ENCODE measurements at regions of chr9 and their contacts with region 1.

Region 1: GRCh38 chr9:71725590-71726338 is 42.5 kb downstream of the CEMIP2 start:
- DNase-seq: peak; percentile 90
- ATAC-seq: peak; percentile 53
- H3K4me3 ChIP-seq: no peak overlapping the region
- H3K27ac ChIP-seq: no peak overlapping the region
- H3K4me1 ChIP-seq: peaks cover 8% of the 10 kb centered on the region
- H3K27me3 ChIP-seq: no peaks in the 10 kb centered on the region
- CTCF ChIP-seq: no peak
- POLR2A ChIP-seq: no peak
- RAD21 ChIP-seq: no peak

Region 2: GRCh38 chr9:70285246-70285645 is 1440.5 kb before region 1 on chr9:
- CTCF ChIA-PET with region 1: no interaction called
- POLR2A ChIA-PET with region 1: no interaction called
- dilution Hi-C with region 1: no loop called
- in situ Hi-C with region 1: loop called (anchors 25 kb)
- intact Hi-C with region 1: no loop called
- DNase-seq: peak; percentile 73
- ATAC-seq: peak; percentile 74
- H3K4me3 ChIP-seq: no peak overlapping the region
- H3K27ac ChIP-seq: peak overlapping the region; percentile 81; the same call in 1 of the 2 replicates
- H3K4me1 ChIP-seq: peaks cover 15% of the 10 kb centered on the region
- H3K27me3 ChIP-seq: no peaks in the 10 kb centered on the region
- CTCF ChIP-seq: no peak
- POLR2A ChIP-seq: no peak
- RAD21 ChIP-seq: no peak

Region 3: GRCh38 chr9:70438341-70438928 is 1287.3 kb before region 1 on chr9:
- CTCF ChIA-PET with region 1: no interaction called
- POLR2A ChIA-PET with region 1: no interaction called
- dilution Hi-C with region 1: no loop called
- in situ Hi-C with region 1: loop called (anchors 25 kb)
- intact Hi-C with region 1: no loop called
- DNase-seq: peak; percentile 73
- ATAC-seq: peak; percentile 49
- H3K4me3 ChIP-seq: no peak overlapping the region
- H3K27ac ChIP-seq: peak overlapping the region; percentile 20; the same call in 1 of the 2 replicates
- H3K4me1 ChIP-seq: peaks cover 11% of the 10 kb centered on the region
- H3K27me3 ChIP-seq: no peaks in the 10 kb centered on the region
- CTCF ChIP-seq: no peak
- POLR2A ChIP-seq: no peak
- RAD21 ChIP-seq: no peak

Region 4: DNA sequence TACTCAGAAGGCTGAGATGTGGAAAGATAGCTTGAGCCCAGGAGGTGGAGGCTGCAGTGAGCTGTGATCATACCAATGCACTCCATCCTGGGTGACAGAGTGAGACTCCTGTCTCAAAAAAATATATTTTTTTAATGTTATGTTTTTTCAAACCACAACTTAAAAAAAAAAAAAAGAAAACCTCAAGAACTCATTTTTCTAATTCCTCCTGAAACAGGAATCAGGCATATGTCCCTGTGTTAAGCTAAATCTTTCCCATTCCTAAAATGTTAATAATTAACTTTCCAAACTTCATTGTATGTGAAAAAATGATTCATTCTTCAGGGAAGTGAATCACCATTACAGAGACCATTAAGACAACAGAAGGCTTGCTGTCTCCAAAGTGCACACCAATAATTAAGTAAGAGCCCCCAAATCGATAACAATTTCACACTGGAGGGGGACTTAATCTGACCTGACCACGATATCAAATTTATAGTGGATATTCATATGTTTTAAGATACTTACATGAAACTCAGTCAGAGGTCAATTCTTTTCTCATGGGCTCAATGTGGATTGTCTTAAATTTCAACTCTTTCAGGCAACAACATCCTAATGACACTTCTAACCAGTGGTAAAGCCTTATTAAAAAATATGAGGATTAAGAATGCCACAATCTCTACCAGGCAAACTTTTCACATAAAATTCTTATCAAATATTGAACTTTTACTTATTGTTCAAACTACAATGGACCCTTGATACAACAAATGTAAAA is 37.3 kb after region 1 on chr9:
- CTCF ChIA-PET with region 1: interaction called, 4 read pairs
- POLR2A ChIA-PET with region 1: no interaction called
- dilution Hi-C with region 1: no loop called
- in situ Hi-C with region 1: loop called (anchors 5 kb)
- intact Hi-C with region 1: loop called (anchors 2 kb)
- DNase-seq: peak; percentile 84
- ATAC-seq: peak; percentile 48
- H3K4me3 ChIP-seq: no peak overlapping the region
- H3K27ac ChIP-seq: peak overlapping the region; percentile 75
- H3K4me1 ChIP-seq: peaks cover 17% of the 10 kb centered on the region
- H3K27me3 ChIP-seq: no peaks in the 10 kb centered on the region
- CTCF ChIP-seq: no peak
- POLR2A ChIP-seq: no peak
- RAD21 ChIP-seq: no peak

Region 5: DNA sequence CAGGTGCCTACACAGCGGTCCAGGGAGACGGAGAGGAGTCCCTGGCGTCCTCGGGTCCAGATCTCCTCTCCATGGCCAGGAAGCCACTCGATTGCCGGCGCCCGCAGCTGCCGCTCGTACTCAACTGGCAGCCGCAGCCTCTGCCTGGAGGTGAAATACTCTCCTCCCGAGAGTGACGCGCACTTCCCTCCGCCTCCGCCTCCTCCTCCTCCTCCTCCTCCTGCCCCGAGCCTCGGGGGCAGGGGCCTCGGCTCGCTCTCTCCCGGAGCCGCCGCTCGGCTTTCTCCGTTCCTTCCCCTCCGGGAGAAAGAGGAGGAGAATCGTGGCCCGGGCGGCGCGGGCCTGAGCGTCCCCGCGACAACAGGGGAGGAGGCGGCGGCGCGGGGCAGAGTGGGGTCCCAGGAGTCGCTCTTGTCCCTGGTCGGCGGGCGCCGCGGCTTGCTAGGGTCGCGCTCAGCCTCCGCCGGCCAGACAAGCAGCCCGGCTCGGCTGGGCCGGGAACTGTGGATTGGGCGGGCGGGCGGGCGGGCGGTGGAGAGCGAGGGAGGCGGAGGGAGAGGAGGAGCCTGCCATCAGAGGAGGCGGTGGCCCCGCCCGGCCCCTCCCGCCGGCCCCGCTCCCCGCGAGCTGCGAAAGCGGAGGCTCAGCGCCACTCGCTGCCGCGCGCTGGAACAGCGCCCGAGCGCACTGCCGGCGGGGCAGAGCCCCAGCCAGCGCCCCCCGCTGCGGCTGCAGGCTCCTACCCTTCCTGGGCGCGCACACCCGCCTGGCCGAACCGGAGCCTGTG is 42.8 kb after region 1 on chr9 and contains the start of gene CEMIP2:
- CTCF ChIA-PET with region 1: no interaction called
- POLR2A ChIA-PET with region 1: no interaction called
- dilution Hi-C with region 1: no loop called
- in situ Hi-C with region 1: loop called (anchors 5 kb)
- intact Hi-C with region 1: loop called (anchors 2 kb)
- DNase-seq: peak; percentile 86
- ATAC-seq: peak; percentile 86
- H3K4me3 ChIP-seq: peak within 1 kb of the TSS; percentile 98
- H3K27ac ChIP-seq: peak within 1 kb of the TSS; percentile 95
- H3K4me1 ChIP-seq: peaks cover 6% of the 10 kb centered on the region; the same call in 1 of the 2 replicates
- H3K27me3 ChIP-seq: 0 out of 2 replicates have a peak, but pooled peaks cover 1% of the 10 kb centered on the region
- CTCF ChIP-seq: peak; percentile 63
- POLR2A ChIP-seq: peak; percentile 98
- RAD21 ChIP-seq: peak; percentile 74
- total RNA-seq, gene CEMIP2: 58.6 and 65.2 TPM in 2 replicates

Region 6: DNA sequence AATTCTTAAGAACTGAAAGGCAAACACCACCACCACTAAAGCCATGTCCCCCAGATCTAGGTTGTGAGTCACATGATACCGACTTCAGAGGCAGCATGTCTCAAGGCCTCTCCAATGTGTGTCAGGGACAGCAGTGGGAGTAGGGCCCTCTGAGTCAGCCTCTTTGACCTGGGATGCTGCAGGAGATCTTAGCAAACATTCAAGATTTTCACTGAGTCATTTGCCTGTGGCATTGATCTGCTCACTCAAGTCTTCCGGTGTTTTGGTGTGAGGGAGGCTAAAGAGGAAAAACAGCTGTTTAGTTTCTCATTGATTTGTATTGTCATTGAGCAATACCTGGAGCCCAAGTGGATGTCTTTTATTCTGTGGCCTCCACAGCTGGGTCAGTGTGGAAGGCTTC is 831.8 kb after region 1 on chr9:
- CTCF ChIA-PET with region 1: no interaction called
- POLR2A ChIA-PET with region 1: no interaction called
- dilution Hi-C with region 1: no loop called
- in situ Hi-C with region 1: loop called (anchors 25 kb)
- intact Hi-C with region 1: no loop called
- DNase-seq: peak; percentile 97
- ATAC-seq: peak; percentile 74
- H3K4me3 ChIP-seq: no peak overlapping the region
- H3K27ac ChIP-seq: peak overlapping the region; percentile 35; the same call in 1 of the 2 replicates
- H3K4me1 ChIP-seq: peaks cover 9% of the 10 kb centered on the region
- H3K27me3 ChIP-seq: no peaks in the 10 kb centered on the region
- CTCF ChIP-seq: no peak
- POLR2A ChIP-seq: no peak
- RAD21 ChIP-seq: peak; percentile 20; the same call in 1 of the 2 replicates

Measured in IMR-90 (cell line).